ENCODE measurements at regions of chr14 and their contacts with region 1.

Region 1: DNA sequence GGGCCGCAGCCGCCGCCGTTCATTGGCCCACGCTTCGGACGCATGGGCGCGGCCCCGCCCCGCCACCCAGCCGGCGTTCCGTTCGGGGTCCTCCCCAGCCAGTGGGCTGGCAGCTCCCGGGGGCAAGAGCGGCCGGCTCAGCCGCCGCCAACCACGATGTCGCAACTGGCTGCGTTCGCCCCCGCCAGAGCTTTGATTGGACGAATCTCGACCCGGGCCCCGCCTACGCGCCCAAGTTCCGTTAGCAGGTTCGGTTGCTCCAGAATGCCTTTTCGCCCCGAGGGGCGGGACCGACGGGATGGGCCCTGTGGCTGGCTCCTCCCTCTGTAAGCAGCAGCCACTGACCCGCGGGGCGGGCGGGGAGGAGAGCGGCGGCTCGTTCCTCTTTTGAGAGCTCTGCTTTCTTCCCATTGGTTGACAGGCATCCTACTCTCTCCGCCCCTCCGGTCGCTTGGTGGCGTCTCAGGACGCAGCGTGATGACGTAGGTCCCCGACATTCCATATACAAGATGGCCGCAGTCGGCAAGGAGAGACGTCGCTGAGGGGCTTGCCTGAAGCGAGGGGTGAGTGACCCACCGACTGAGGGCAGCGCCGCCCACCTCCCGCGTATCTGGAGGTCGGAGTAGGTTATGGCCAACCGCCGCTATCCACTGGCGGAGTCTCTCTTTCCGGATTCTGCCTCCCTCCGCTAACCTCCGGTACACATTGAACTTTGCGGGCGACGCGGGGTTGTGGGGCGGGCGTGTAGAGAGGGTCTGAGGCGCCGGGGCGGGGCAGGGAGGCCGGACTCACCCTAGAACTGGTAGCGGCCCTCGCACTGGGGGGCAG is at the start of gene CCNK:
- DNase-seq: peak; percentile 100
- ATAC-seq: peak; percentile 87
- H3K4me3 ChIP-seq: peak within 1 kb of the TSS; percentile 97 to 99
- H3K4me3 Mint-ChIP-seq: peak within 1 kb of the TSS; percentile 99
- H3K27ac ChIP-seq: peak within 1 kb of the TSS; percentile 95 to 96
- H3K27ac Mint-ChIP-seq: peak within 1 kb of the TSS; percentile 99
- H3K4me1 ChIP-seq: peaks cover 38% of the 10 kb centered on the region
- H3K4me1 Mint-ChIP-seq: peaks cover 60% of the 10 kb centered on the region
- H3K27me3 ChIP-seq: no peaks in the 10 kb centered on the region
- H3K27me3 Mint-ChIP-seq: no peaks in the 10 kb centered on the region
- CTCF ChIP-seq: no peak
- total RNA-seq, gene CCNK: 171 to 177 TPM

Region 2: GRCh38 chr14:99793213-99794150 is 312.4 kb after region 1 on chr14 and contains the start of gene EML1:
- CTCF ChIA-PET with region 1: no interaction called
- POLR2A ChIA-PET with region 1: no interaction called
- intact Hi-C with region 1: loop called in 1 of 2 experiments (anchors 10 kb)
- DNase-seq: peak; percentile 44 to 88 (median 67)
- ATAC-seq: peak; percentile 80
- H3K4me3 ChIP-seq: peak within 1 kb of the TSS in 1 of 2 experiments; percentile 26
- H3K4me3 Mint-ChIP-seq: peak within 1 kb of the TSS; percentile 80
- H3K27ac ChIP-seq: no peak within 1 kb of the TSS
- H3K27ac Mint-ChIP-seq: peak within 1 kb of the TSS; percentile 11
- H3K4me1 ChIP-seq: peaks cover 7% of the 10 kb centered on the region
- H3K4me1 Mint-ChIP-seq: peaks cover 14% of the 10 kb centered on the region
- H3K27me3 ChIP-seq: peaks cover 0 to 15% of the 10 kb centered on the region in 2 experiments
- H3K27me3 Mint-ChIP-seq: peaks cover 22% of the 10 kb centered on the region
- CTCF ChIP-seq: no peak
- total RNA-seq, gene EML1: not detected